CD4-positive, alpha-beta T cell (primary cell): ENCODE measurements at regions of chr16 and their contacts with region 1.

Region 1: GRCh38 chr16:29973384-29974246 is at the start of gene TAOK2:
- DNase-seq: peak; percentile 76 to 98 (median 90)
- ATAC-seq: peak; percentile 87
- H3K4me3 ChIP-seq: peak within 1 kb of the TSS; percentile 99
- H3K4me3 Mint-ChIP-seq: peak within 1 kb of the TSS; percentile 98
- H3K27ac ChIP-seq: peak within 1 kb of the TSS; percentile 70 to 83
- H3K27ac Mint-ChIP-seq: peak within 1 kb of the TSS; percentile 84
- H3K4me1 ChIP-seq: peaks cover 39% of the 10 kb centered on the region
- H3K4me1 Mint-ChIP-seq: peaks cover 50% of the 10 kb centered on the region
- H3K27me3 ChIP-seq: no peaks in the 10 kb centered on the region
- H3K27me3 Mint-ChIP-seq: no peaks in the 10 kb centered on the region
- CTCF ChIP-seq: no peak
- total RNA-seq, gene TAOK2: 13.1 to 14.1 TPM

Region 2: DNA sequence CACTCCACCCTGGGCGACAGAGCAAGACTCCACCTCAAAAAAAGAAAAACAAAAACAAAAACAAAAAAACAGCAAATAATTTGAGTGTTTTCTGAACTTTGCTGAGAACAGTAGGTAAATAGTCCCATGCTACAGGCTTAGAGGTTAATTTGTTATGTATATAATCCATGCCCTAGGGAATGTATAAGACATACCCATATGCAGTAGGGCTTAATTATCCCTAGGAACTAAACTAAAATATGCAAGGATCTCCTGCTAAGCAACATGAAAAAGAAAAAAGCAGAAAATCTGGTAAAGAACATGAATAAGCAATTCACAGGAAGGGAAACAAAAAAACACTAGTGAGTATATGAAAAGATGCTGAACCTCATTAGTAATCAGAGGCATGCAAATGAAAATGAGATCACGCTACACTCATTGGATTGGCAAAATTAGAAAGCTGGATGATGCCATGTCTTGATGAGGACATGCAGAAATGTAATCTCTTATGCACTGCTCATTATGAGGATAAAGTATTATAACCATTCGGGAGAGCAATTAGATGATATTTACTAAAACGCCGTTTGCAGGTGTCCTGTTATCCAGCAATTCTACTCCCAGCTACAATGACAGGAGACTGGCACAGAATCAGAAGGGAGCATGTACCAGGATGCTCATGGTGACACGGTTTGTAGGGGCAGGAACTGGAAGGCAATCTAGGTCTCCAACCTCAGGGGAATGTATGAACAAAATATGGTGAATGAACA is 53.2 kb before region 1 on chr16:
- CTCF ChIA-PET with region 1: interaction called, 3 read pairs
- POLR2A ChIA-PET with region 1: interaction called, 21 read pairs
- intact Hi-C with region 1: loop called in 1 of 2 experiments (anchors 5 kb)
- DNase-seq: no peak
- ATAC-seq: no peak
- H3K4me3 ChIP-seq: no peak overlapping the region
- H3K4me3 Mint-ChIP-seq: no peak overlapping the region
- H3K27ac ChIP-seq: no peak overlapping the region
- H3K27ac Mint-ChIP-seq: no peak overlapping the region
- H3K4me1 ChIP-seq: peaks cover 17% of the 10 kb centered on the region
- H3K4me1 Mint-ChIP-seq: peaks cover 31% of the 10 kb centered on the region
- H3K27me3 ChIP-seq: no peaks in the 10 kb centered on the region
- H3K27me3 Mint-ChIP-seq: no peaks in the 10 kb centered on the region
- CTCF ChIP-seq: no peak

Region 3: DNA sequence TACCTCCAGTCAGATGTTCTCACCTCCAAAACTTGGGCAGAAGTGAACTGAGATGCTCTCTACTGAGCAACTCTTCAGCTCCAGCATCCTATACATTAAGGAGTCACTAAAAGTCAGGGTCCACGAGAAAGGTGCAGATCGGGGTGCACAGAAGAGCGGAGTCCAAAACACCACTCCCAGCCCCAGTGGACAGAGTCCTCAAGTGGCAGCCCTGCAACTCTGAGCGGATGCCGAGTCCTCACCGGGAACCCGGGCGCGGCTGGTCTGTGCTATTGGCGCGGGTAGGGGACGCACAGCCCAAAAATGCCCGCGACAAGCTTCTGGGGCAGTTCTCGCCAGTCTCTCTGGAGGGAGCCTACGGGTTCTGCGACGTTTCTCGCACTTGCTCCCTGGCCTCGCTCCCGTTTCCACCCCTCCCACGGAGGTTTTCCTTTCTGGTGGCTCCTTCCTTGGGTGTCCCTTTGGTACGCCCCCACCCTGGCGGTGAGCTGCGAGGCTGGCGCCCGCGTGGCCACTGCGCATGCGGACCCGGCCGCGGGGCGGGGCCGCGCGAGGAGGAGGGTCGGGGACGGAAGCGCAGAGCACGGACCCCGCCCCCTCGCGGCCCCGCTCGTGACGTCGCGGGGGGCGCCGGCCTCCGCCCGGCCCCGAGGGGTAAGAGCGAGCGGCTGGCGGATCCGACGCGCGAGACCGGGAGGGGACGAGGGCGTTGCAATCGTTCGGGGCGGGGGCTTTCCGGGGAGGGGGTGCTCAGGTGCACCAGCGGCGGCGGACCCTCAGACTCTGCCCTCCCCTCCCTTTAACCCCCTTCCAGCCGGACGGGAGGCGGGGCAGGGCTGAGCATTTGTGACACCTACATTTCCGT is 11.9 kb before region 1 on chr16 and contains the start of gene TMEM219:
- CTCF ChIA-PET with region 1: interaction called, 17 read pairs
- POLR2A ChIA-PET with region 1: interaction called, 69 read pairs
- intact Hi-C with region 1: loop called in 1 of 2 experiments (anchors 1 kb)
- DNase-seq: peak; percentile 87 to 97 (median 94)
- ATAC-seq: peak; percentile 83
- H3K4me3 ChIP-seq: peak within 1 kb of the TSS; percentile 88
- H3K4me3 Mint-ChIP-seq: peak within 1 kb of the TSS; percentile 93
- H3K27ac ChIP-seq: peak within 1 kb of the TSS; percentile 77 to 92
- H3K27ac Mint-ChIP-seq: peak within 1 kb of the TSS; percentile 91
- H3K4me1 ChIP-seq: peaks cover 23% of the 10 kb centered on the region
- H3K4me1 Mint-ChIP-seq: peaks cover 31% of the 10 kb centered on the region
- H3K27me3 ChIP-seq: no peaks in the 10 kb centered on the region
- H3K27me3 Mint-ChIP-seq: no peaks in the 10 kb centered on the region
- CTCF ChIP-seq: peak; percentile 32
- total RNA-seq, gene TMEM219: 56.9 to 63.3 TPM

Region 4: GRCh38 chr16:30025156-30025555 is 51.5 kb after region 1 on chr16:
- CTCF ChIA-PET with region 1: no interaction called
- POLR2A ChIA-PET with region 1: no interaction called
- intact Hi-C with region 1: no loop called
- DNase-seq: peak in 1 of 14 experiments; percentile 26
- ATAC-seq: no peak
- H3K4me3 ChIP-seq: no peak overlapping the region
- H3K4me3 Mint-ChIP-seq: no peak overlapping the region
- H3K27ac ChIP-seq: no peak overlapping the region
- H3K27ac Mint-ChIP-seq: no peak overlapping the region
- H3K4me1 ChIP-seq: peaks cover 13% of the 10 kb centered on the region
- H3K4me1 Mint-ChIP-seq: peaks cover 18% of the 10 kb centered on the region
- H3K27me3 ChIP-seq: peaks cover 18 to 28% of the 10 kb centered on the region in 2 experiments
- H3K27me3 Mint-ChIP-seq: peaks cover 32% of the 10 kb centered on the region
- CTCF ChIP-seq: no peak